GM10248 (cell line): ENCODE measurements at regions of chr1 and their contacts with region 1.

Region 1: GRCh38 chr1:99685516-99686180 is 39.7 kb downstream of the PALMD start:
- DNase-seq: peak; percentile 11
- CTCF ChIP-seq: peak; percentile 57

Region 2: DNA sequence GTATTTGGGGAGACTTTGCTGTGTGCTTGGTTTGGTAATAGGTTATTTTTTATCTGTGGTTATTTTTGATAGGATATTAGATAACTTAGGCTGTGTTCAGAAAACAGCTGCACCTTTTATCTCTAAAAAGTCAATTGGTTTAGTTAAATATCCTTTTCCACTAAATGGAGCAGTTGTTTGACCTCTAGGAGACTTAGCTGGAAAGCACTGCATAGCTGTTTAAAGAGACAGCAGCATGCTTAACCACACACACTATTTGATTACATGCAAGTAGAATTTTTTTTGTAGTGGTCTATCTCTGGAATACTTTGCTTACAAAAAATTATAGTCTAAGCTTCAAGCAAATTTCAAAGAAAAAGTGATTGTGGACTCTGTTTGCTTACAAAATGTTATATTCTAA is 46.2 kb before region 1 on chr1:
- CTCF ChIA-PET with region 1: no interaction called
- POLR2A ChIA-PET with region 1: no interaction called
- DNase-seq: no peak
- CTCF ChIP-seq: no peak

Region 3: DNA sequence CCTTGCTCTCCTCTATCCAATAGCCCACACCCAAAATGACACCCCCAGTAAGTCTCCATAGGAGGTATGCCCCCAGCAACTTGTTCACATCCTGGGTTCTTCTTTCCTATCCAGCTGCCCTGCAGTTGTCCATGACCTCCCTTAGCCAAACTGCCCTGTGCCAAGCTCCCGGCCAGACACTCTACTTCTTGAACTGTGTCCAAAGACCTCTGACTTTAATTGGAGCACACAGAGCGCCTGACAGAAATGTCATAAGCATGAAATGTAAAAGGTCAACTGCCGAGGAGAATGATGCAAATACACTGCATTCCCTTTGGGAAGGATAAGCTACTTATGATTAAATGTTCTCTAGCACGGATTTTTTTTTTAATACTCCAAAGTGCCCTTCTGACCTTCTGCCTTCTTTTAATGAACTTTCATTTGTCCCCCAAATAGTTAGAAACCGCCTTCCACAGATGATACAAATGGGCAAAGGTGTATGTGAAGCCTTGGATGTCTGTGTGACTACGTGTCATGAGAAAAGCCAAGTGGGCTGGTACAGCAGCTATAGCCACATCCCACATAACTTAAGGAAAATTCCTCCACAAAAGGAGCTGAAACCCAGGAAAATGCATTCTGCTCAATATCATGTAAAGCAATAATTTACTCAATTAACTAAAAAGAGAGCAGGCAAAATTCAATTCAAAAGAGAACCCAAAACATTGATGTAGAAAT is 13.0 kb before region 1 on chr1:
- CTCF ChIA-PET with region 1: interaction called, 30 read pairs
- POLR2A ChIA-PET with region 1: no interaction called
- DNase-seq: no peak
- CTCF ChIP-seq: no peak

Region 4: DNA sequence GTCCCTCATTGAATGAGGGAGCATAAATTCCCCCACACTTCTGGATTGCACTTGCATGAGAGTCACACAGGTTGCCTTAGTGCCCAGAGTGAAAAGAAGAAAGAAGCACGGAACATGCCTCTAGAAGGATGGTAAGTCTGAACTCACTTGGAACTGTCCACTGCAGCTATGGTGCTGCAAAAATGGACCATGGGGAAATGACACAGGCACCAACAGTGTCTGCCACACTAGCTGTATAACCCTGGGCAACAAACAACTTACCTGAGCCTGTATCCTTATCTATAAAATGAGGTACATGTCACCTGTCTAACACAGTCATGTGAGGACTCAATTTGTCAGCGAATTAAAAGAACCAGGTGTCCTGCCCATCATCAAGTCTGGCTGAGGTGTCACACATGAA is 11.0 kb after region 1 on chr1:
- CTCF ChIA-PET with region 1: interaction called, 30 read pairs
- POLR2A ChIA-PET with region 1: no interaction called
- DNase-seq: no peak
- CTCF ChIP-seq: no peak

Region 5: DNA sequence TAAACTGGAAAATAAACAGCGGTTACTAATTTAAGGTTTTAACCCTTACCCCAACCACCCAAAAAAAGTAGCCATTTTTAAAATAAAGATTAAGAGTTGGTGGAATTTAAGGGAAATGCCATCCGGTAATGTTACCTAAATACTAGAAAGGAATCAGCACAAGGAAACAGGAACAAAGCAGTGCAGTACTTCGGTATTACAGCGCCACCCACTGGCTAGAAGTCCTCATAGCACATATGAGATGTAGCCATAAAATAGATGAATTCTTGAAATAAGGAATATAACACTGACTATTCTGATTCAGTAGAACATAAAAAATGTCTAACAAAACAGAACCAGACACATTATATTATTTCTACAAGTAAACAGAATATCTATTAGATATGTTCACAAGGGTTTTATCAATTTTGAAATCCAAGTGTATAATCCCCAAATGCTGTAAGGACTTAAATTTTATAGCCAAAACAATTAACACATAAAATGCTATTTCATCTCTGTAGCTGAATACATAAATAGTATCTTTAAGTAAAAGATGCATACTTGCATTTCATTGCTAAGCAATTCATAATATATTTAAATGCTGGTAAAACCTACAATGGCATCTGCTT is 22.0 kb after region 1 on chr1:
- CTCF ChIA-PET with region 1: interaction called, 16 read pairs
- POLR2A ChIA-PET with region 1: no interaction called
- DNase-seq: peak; percentile 56
- CTCF ChIP-seq: peak; percentile 88